CD4-positive, alpha-beta memory T cell (primary cell): ENCODE measurements at regions of chr14 and their contacts with region 1.

Region 1: GRCh38 chr14:23588884-23589598 is 10.5 kb upstream of the JPH4 start:
- DNase-seq: peak; percentile 77 to 80 (median 78)
- H3K4me3 ChIP-seq: no peak overlapping the region
- H3K4me3 Mint-ChIP-seq: peak overlapping the region in 1 of 8 donors; percentile 46
- H3K27ac ChIP-seq: no peak overlapping the region
- H3K27ac Mint-ChIP-seq: peak overlapping the region in 1 of 7 donors; percentile 50
- H3K4me1 ChIP-seq: peaks cover 4% of the 10 kb centered on the region
- H3K4me1 Mint-ChIP-seq: peaks cover 4 to 11% (median 6%) of the 10 kb centered on the region in 4 donors
- H3K27me3 ChIP-seq: no peaks in the 10 kb centered on the region
- H3K27me3 Mint-ChIP-seq: peaks cover 7 to 16% of the 10 kb centered on the region in 2 donors

Region 2: DNA sequence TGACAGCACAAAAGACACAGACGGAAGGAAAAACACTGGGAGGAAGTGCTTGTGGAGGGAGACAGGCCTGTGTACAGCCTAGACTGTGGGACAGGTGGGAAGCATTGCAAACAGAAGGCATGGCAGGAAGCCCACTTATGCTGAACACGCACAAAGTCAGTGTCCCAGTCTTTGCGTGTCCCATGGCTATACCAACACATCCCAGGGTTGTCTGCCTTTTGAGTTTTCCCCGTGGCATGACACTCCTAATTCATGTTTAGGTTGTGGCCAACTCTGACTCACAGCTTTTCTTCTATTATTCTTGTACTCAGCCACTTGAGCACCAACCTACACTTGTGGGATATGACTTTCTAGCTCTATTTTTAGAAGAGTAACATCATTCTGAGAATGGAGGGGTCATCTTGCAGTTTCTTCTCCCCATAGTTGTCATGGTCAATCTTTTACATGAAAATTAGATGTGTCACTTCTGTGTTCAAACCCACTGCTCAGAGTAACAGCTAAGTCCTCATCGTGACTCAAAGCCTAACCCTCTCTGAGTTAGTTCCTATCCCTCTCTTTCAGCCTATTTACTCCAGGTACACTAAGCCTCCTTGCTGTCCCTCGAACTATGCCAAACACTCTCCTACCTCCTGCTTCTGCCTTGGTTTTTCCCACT is 17.0 kb after region 1 on chr14:
- CTCF ChIA-PET with region 1: interaction called, 26 read pairs
- POLR2A ChIA-PET with region 1: interaction called, 3 read pairs
- intact Hi-C with region 1: no loop called
- DNase-seq: no peak
- H3K4me3 ChIP-seq: no peak overlapping the region
- H3K4me3 Mint-ChIP-seq: no peak overlapping the region
- H3K27ac ChIP-seq: no peak overlapping the region
- H3K27ac Mint-ChIP-seq: peak overlapping the region in 2 of 7 donors; percentile 1 to 28
- H3K4me1 ChIP-seq: peaks cover 23% of the 10 kb centered on the region
- H3K4me1 Mint-ChIP-seq: peaks cover 22 to 30% (median 25%) of the 10 kb centered on the region in 4 donors
- H3K27me3 ChIP-seq: no peaks in the 10 kb centered on the region
- H3K27me3 Mint-ChIP-seq: peaks cover 0 to 2% of the 10 kb centered on the region in 2 donors

Region 3: GRCh38 chr14:23910101-23910875 is 321.2 kb after region 1 on chr14:
- CTCF ChIA-PET with region 1: interaction called, 23 read pairs
- POLR2A ChIA-PET with region 1: no interaction called
- intact Hi-C with region 1: loop called (anchors 1 kb)
- DNase-seq: peak in 1 of 5 donors; percentile 2
- H3K4me3 ChIP-seq: no peak overlapping the region
- H3K4me3 Mint-ChIP-seq: no peak overlapping the region
- H3K27ac ChIP-seq: no peak overlapping the region
- H3K27ac Mint-ChIP-seq: no peak overlapping the region
- H3K4me1 ChIP-seq: no peaks in the 10 kb centered on the region
- H3K4me1 Mint-ChIP-seq: no peaks in the 10 kb centered on the region
- H3K27me3 ChIP-seq: no peaks in the 10 kb centered on the region
- H3K27me3 Mint-ChIP-seq: peaks cover 6 to 29% of the 10 kb centered on the region in 2 donors

Region 4: DNA sequence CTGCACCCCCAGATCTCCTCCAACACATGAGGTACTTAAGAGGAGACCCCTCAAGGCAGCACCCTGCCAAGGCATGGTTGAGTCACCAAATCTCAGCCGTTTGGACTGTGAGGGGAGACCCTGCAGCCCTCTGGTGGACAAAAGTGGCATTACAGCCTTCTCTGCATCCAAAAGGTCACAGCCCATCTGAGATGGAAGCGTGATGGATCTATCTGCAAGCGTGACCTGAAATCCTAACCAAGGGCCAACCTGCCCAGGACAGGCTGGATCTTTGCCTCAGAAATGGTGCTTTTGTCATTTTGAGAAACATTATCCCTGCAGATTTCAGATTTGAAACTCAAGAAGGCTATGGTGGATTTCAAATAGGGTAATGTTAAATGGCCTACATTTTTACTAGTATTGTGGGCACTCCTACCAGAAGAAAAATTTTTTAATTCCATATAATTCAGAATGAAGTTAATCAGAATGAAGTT is 340.8 kb after region 1 on chr14:
- CTCF ChIA-PET with region 1: interaction called, 73 read pairs
- POLR2A ChIA-PET with region 1: interaction called, 4 read pairs
- intact Hi-C with region 1: loop called (anchors 1 kb)
- DNase-seq: peak; percentile 67 to 73 (median 72)
- H3K4me3 ChIP-seq: no peak overlapping the region
- H3K4me3 Mint-ChIP-seq: no peak overlapping the region
- H3K27ac ChIP-seq: no peak overlapping the region
- H3K27ac Mint-ChIP-seq: no peak overlapping the region
- H3K4me1 ChIP-seq: no peaks in the 10 kb centered on the region
- H3K4me1 Mint-ChIP-seq: peaks cover 0 to 2% (median 0%) of the 10 kb centered on the region in 4 donors
- H3K27me3 ChIP-seq: no peaks in the 10 kb centered on the region
- H3K27me3 Mint-ChIP-seq: peaks cover 2 to 6% of the 10 kb centered on the region in 2 donors

Region 5: DNA sequence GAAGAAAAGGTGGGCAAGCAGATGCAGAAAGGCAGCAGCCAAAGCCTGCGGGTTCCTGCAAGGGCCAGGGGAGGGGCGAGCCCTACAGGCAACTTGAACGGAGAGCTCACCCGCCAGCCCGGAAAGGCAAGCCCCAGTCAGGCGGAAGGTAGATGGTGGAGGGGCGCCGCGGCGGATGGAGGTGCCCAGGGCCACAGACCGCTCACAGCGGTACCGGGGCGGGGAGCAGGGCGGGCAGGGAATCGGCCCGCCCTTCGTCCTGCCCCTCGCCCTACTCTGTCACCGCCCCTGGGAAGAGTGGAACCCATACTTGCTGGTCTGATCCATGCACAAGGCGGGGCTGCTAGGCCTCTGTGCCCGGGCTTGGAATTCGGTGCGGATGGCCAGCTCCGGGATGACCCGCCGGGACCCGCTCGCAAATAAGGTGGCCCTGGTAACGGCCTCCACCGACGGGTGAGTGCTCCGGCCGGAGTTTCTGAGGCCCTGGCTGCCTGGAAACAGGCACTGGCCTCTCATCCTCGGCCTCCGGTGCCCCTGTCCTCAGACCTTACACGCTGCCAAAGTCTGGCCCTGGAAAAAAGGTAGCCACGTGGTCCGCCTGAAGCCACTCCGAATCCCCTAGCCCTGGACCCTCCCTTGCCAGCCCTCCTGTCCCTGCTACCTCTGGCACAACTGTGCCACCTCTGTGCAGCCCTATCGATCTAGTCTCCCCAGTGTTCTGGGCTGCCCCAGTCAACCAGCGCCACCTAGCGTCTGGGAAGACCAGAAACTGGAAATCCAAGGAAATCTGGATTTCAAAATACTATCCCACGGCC is 364.6 kb after region 1 on chr14 and contains the start of gene DHRS4:
- CTCF ChIA-PET with region 1: interaction called, 20 read pairs
- POLR2A ChIA-PET with region 1: interaction called, 4 read pairs
- intact Hi-C with region 1: loop called (anchors 1 kb)
- DNase-seq: peak; percentile 74 to 85 (median 83)
- H3K4me3 ChIP-seq: peak within 1 kb of the TSS; percentile 74 to 82
- H3K4me3 Mint-ChIP-seq: peak within 1 kb of the TSS; percentile 95 to 100 (median 98)
- H3K27ac ChIP-seq: peak within 1 kb of the TSS; percentile 72
- H3K27ac Mint-ChIP-seq: peak within 1 kb of the TSS; percentile 84 to 98 (median 96)
- H3K4me1 ChIP-seq: peaks cover 25% of the 10 kb centered on the region
- H3K4me1 Mint-ChIP-seq: peaks cover 13 to 36% (median 27%) of the 10 kb centered on the region in 4 donors
- H3K27me3 ChIP-seq: no peaks in the 10 kb centered on the region
- H3K27me3 Mint-ChIP-seq: no peaks in the 10 kb centered on the region
- total RNA-seq, gene DHRS4: 14.7 to 15.5 TPM